Activated T-helper 2 cell treated with anti-CD3 and anti-CD28 coated beads, Interferon-gamma antibody, Interleukin-2, Interleukin-4, amounts not matched to agents 10 μg/mL and 5 μg/mL and 100 μg/mL, durations not matched to agents 14 hours and 24 hours and 36 hours (primary cell): ENCODE measurements at regions of chr2 and their contacts with region 1.

Region 1: GRCh38 chr2:32946314-32947075 is at the start of gene LTBP1:
- DNase-seq: peak; percentile 67
- H3K4me3 Mint-ChIP-seq: peak within 1 kb of the TSS; percentile 79
- H3K27ac Mint-ChIP-seq: no peak within 1 kb of the TSS
- H3K4me1 Mint-ChIP-seq: peaks cover 5% of the 10 kb centered on the region
- H3K27me3 Mint-ChIP-seq: peaks cover 38% of the 10 kb centered on the region
- total RNA-seq, gene LTBP1: 0.34 and 0.82 TPM in 2 replicates

Region 2: GRCh38 chr2:32553829-32554432 is 392.6 kb before region 1 on chr2:
- intact Hi-C with region 1: loop called (anchors 5 kb)
- DNase-seq: no peak
- H3K4me3 Mint-ChIP-seq: no peak overlapping the region
- H3K27ac Mint-ChIP-seq: no peak overlapping the region
- H3K4me1 Mint-ChIP-seq: no peaks in the 10 kb centered on the region
- H3K27me3 Mint-ChIP-seq: no peaks in the 10 kb centered on the region

Region 3: DNA sequence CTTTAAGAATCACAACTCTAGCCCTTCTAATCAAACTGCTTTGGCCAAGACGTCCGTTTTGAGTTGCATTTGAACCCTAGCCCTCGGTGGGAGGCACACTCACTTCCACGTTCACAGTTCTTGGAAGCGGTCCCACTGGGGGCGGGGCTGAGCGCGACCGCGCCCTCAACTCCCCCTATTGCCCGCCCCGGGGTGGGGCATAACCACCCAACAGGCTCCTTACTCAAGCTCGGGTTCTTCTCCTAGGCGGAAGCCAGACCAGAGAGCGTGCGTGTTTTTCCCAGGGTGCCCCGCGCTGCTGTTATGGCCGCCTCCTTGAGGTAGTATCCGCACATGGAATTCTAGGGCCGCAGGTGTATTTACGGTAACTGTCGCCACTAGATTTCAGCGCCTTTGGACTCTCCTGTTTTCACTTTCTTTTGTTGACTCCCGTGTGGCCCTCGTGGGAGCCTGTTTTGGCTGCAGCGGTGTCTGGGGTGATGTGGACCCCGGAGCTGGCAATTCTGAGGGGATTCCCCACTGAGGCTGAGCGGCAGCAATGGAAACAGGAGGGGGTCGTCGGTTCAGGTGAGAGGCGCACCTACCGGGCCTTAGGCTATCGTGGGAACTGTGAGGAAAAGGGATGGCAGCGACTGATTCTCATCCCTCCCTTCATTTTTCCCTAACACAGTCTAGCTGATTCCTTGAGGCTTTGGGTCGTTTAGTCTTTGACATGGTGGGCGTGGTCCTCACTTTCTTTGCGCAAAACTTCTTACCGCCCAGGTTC is 318.5 kb before region 1 on chr2 and contains the start of gene TTC27:
- intact Hi-C with region 1: loop called (anchors 5 kb)
- DNase-seq: peak; percentile 93
- H3K4me3 Mint-ChIP-seq: peak within 1 kb of the TSS; percentile 95
- H3K27ac Mint-ChIP-seq: peak within 1 kb of the TSS; percentile 95
- H3K4me1 Mint-ChIP-seq: peaks cover 27% of the 10 kb centered on the region
- H3K27me3 Mint-ChIP-seq: no peaks in the 10 kb centered on the region
- total RNA-seq, gene TTC27: 38.8 and 44.9 TPM in 2 replicates

Region 4: GRCh38 chr2:32772638-32773447 is 173.7 kb before region 1 on chr2:
- intact Hi-C with region 1: loop called (anchors 10 kb)
- DNase-seq: no peak
- H3K4me3 Mint-ChIP-seq: no peak overlapping the region
- H3K27ac Mint-ChIP-seq: no peak overlapping the region
- H3K4me1 Mint-ChIP-seq: peaks cover 20% of the 10 kb centered on the region
- H3K27me3 Mint-ChIP-seq: no peaks in the 10 kb centered on the region

Region 5: GRCh38 chr2:32884346-32884745 is 62.1 kb before region 1 on chr2:
- intact Hi-C with region 1: no loop called
- DNase-seq: no peak
- H3K4me3 Mint-ChIP-seq: no peak overlapping the region
- H3K27ac Mint-ChIP-seq: no peak overlapping the region
- H3K4me1 Mint-ChIP-seq: no peaks in the 10 kb centered on the region
- H3K27me3 Mint-ChIP-seq: peaks cover 1% of the 10 kb centered on the region

Region 6: GRCh38 chr2:33205693-33206434 is 259.4 kb after region 1 on chr2:
- intact Hi-C with region 1: no loop called
- DNase-seq: no peak
- H3K4me3 Mint-ChIP-seq: no peak overlapping the region
- H3K27ac Mint-ChIP-seq: no peak overlapping the region
- H3K4me1 Mint-ChIP-seq: peaks cover 3% of the 10 kb centered on the region
- H3K27me3 Mint-ChIP-seq: peaks cover 12% of the 10 kb centered on the region

Region 7: GRCh38 chr2:33272001-33272400 is 325.5 kb after region 1 on chr2:
- intact Hi-C with region 1: loop called (anchors 5 kb)
- DNase-seq: no peak
- H3K4me3 Mint-ChIP-seq: no peak overlapping the region
- H3K27ac Mint-ChIP-seq: no peak overlapping the region
- H3K4me1 Mint-ChIP-seq: peaks cover 14% of the 10 kb centered on the region
- H3K27me3 Mint-ChIP-seq: peaks cover 39% of the 10 kb centered on the region

Region 8: GRCh38 chr2:33372940-33373553 is 426.6 kb after region 1 on chr2:
- intact Hi-C with region 1: loop called (anchors 5 kb)
- DNase-seq: no peak
- H3K4me3 Mint-ChIP-seq: no peak overlapping the region
- H3K27ac Mint-ChIP-seq: no peak overlapping the region
- H3K4me1 Mint-ChIP-seq: no peaks in the 10 kb centered on the region
- H3K27me3 Mint-ChIP-seq: peaks cover 8% of the 10 kb centered on the region

Region 9: GRCh38 chr2:33599175-33599942 is 652.9 kb after region 1 on chr2 and contains the start of gene FAM98A:
- intact Hi-C with region 1: loop called (anchors 5 kb)
- DNase-seq: peak; percentile 98
- H3K4me3 Mint-ChIP-seq: peak within 1 kb of the TSS; percentile 88
- H3K27ac Mint-ChIP-seq: peak within 1 kb of the TSS; percentile 97
- H3K4me1 Mint-ChIP-seq: peaks cover 20% of the 10 kb centered on the region
- H3K27me3 Mint-ChIP-seq: peaks cover 3% of the 10 kb centered on the region
- total RNA-seq, gene FAM98A: 62.7 and 63.8 TPM in 2 replicates